Activated CD4-positive, alpha-beta T cell treated with anti-CD3 and anti-CD28 coated beads for 36 hours (primary cell): ENCODE measurements at regions of chr1 and their contacts with region 1.

Region 1: GRCh38 chr1:24491577-24492360 is 10.9 kb upstream of the RCAN3 start:
- DNase-seq: no peak
- ATAC-seq: no peak
- H3K4me3 Mint-ChIP-seq: no peak overlapping the region
- H3K27ac Mint-ChIP-seq: no peak overlapping the region
- H3K4me1 Mint-ChIP-seq: peaks cover 45% of the 10 kb centered on the region
- H3K27me3 Mint-ChIP-seq: no peaks in the 10 kb centered on the region

Region 2: GRCh38 chr1:22914633-22915217 is 1577.0 kb before region 1 on chr1:
- CTCF ChIA-PET with region 1: no interaction called
- POLR2A ChIA-PET with region 1: no interaction called
- intact Hi-C with region 1: no loop called
- DNase-seq: no peak
- ATAC-seq: no peak
- H3K4me3 Mint-ChIP-seq: no peak overlapping the region
- H3K27ac Mint-ChIP-seq: no peak overlapping the region
- H3K4me1 Mint-ChIP-seq: no peaks in the 10 kb centered on the region
- H3K27me3 Mint-ChIP-seq: no peaks in the 10 kb centered on the region

Region 3: DNA sequence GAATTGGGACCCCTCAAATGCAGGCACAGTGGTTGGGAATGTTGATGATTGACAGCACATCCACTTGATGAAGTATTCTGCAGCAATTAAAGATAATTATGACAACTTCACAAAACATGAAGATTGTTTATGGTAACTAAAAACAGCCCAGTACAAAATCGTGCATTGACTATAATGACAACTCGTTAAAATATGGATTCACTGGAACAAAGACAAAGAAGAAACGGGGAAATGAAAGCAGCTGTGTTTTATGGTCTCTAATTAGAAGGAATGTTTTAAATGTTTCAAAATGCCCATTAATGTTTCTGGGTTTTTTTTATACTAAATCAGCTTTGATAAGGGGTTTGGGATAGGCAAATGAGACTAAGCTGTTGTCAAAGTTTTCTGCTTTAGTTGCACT is 40.0 kb before region 1 on chr1:
- CTCF ChIA-PET with region 1: no interaction called
- POLR2A ChIA-PET with region 1: no interaction called
- intact Hi-C with region 1: no loop called
- DNase-seq: no peak
- ATAC-seq: no peak
- H3K4me3 Mint-ChIP-seq: no peak overlapping the region
- H3K27ac Mint-ChIP-seq: no peak overlapping the region
- H3K4me1 Mint-ChIP-seq: peaks cover 7% of the 10 kb centered on the region
- H3K27me3 Mint-ChIP-seq: no peaks in the 10 kb centered on the region

Region 4: GRCh38 chr1:24481101-24481500 is 10.7 kb before region 1 on chr1:
- CTCF ChIA-PET with region 1: interaction called, 15 read pairs
- POLR2A ChIA-PET with region 1: interaction called, 3 read pairs
- intact Hi-C with region 1: no loop called
- DNase-seq: peak; percentile 81
- ATAC-seq: peak; percentile 76
- H3K4me3 Mint-ChIP-seq: peak overlapping the region; percentile 60
- H3K27ac Mint-ChIP-seq: peak overlapping the region; percentile 97
- H3K4me1 Mint-ChIP-seq: peaks cover 65% of the 10 kb centered on the region
- H3K27me3 Mint-ChIP-seq: no peaks in the 10 kb centered on the region